ENCODE measurements at regions of chr1 and their contacts with region 1.

Region 1: GRCh38 chr1:40684669-40685068 is 6.8 kb upstream of the NFYC start:
- DNase-seq: no peak

Region 2: GRCh38 chr1:40531381-40532061 is 153.1 kb before region 1 on chr1 and contains the start of gene ZNF684:
- in situ Hi-C with region 1: loop called (anchors 10 kb)
- DNase-seq: peak; percentile 98
- total RNA-seq, gene ZNF684: 14.1 and 15.9 TPM in 2 replicates

Region 3: DNA sequence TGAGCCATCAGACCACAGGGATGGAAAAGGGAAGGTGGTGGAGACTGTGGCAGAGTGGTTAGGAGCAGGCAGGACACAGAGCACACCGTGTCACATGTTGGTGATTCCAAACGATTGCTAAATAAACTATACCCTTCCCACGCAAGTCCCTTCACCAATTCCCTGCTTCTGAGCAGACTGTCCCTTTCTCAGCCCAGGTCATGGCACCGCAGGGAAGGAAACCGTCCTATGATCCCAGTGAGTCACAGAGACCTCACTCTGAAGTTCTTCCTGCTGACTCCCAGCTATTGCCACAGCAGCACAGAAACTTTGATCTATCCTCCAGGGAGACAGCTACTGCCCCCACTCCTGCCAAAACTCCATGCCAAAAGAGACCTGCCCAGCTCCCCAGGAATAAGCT is 38.4 kb before region 1 on chr1:
- in situ Hi-C with region 1: loop called (anchors 5 kb)
- DNase-seq: no peak